GM10248 (cell line): ENCODE measurements at regions of chr22 and their contacts with region 1.

Region 1: GRCh38 chr22:30890686-30891442 is 77.7 kb downstream of the MORC2 start:
- DNase-seq: peak; percentile 76
- CTCF ChIP-seq: peak; percentile 76

Region 2: DNA sequence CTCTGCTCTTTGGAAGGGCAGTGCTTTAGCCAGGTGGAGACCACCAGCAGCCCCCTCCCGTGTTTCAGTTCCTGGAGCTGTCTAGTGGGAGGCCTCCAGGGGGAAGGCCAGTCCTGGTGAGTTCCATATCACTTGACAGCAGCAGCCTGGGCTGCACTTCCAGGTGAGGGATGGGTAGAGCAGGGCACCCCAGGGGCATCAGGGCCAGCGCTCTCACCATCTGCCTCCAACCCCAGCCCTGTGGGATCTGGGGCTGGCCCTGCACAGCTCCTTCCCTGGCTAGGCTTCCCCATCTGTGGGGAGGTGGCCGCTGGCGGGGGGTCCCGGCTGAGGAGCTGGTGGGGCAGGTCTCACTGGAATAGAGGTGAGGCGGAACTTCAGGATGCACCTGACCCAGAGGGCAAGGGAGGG is 17.2 kb after region 1 on chr22:
- CTCF ChIA-PET with region 1: interaction called, 14 read pairs
- POLR2A ChIA-PET with region 1: no interaction called
- DNase-seq: no peak
- CTCF ChIP-seq: no peak

Region 3: GRCh38 chr22:30953206-30953605 is 62.3 kb after region 1 on chr22:
- CTCF ChIA-PET with region 1: no interaction called
- POLR2A ChIA-PET with region 1: no interaction called
- DNase-seq: no peak
- CTCF ChIP-seq: no peak